GM23248 (cell line): ENCODE measurements at regions of chr6 and their contacts with region 1.

Region 1: GRCh38 chr6:41367700-41368099 is 32.3 kb downstream of the NCR2 start:
- DNase-seq: peak; percentile 70
- H3K4me3 ChIP-seq: no peak overlapping the region
- H3K27ac ChIP-seq: no peak overlapping the region
- H3K4me1 ChIP-seq: no peaks in the 10 kb centered on the region
- H3K27me3 ChIP-seq: peaks cover 50% of the 10 kb centered on the region

Region 2: GRCh38 chr6:41675176-41675770 is 307.6 kb after region 1 on chr6:
- in situ Hi-C with region 1: loop called (anchors 10 kb)
- DNase-seq: no peak
- H3K4me3 ChIP-seq: no peak overlapping the region
- H3K27ac ChIP-seq: no peak overlapping the region
- H3K4me1 ChIP-seq: no peaks in the 10 kb centered on the region
- H3K27me3 ChIP-seq: no peaks in the 10 kb centered on the region

Region 3: DNA sequence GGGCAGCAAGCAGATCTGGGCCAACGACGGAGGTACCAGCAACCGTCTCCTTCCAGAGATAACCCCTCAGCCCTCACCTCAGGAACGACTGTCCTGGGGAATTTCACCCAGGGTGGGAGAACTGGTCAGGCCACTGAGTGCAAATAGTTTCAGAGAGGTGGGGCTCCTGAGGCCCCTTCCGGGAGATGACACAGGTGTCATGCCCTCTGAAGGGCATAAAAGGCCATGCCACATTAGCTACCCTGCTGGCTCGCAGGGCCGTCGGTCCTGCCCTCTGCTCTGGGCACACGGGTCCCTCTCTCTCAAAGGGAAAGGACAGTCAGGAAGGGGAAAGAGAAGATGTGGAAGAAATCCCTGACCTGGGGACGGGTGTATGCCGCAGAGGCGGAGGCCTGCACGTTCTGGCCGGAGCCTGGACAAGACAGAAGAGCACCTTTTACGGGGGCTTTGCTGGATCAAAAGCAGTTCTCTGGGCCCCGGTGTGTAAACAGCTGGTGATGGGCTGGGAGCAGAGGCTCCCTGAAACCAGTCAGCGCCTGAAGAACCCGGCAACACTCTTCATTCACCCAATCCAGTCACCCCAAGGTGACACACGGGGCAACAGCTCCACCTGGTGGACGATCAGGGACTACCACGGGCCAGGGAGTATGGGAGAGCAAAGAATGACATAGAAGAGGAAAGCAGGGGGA is 676.2 kb after region 1 on chr6:
- in situ Hi-C with region 1: loop called (anchors 25 kb)
- DNase-seq: peak; percentile 85
- H3K4me3 ChIP-seq: no peak overlapping the region
- H3K27ac ChIP-seq: no peak overlapping the region
- H3K4me1 ChIP-seq: no peaks in the 10 kb centered on the region
- H3K27me3 ChIP-seq: no peaks in the 10 kb centered on the region